ENCODE measurements at regions of chr12 and their contacts with region 1.

Region 1: DNA sequence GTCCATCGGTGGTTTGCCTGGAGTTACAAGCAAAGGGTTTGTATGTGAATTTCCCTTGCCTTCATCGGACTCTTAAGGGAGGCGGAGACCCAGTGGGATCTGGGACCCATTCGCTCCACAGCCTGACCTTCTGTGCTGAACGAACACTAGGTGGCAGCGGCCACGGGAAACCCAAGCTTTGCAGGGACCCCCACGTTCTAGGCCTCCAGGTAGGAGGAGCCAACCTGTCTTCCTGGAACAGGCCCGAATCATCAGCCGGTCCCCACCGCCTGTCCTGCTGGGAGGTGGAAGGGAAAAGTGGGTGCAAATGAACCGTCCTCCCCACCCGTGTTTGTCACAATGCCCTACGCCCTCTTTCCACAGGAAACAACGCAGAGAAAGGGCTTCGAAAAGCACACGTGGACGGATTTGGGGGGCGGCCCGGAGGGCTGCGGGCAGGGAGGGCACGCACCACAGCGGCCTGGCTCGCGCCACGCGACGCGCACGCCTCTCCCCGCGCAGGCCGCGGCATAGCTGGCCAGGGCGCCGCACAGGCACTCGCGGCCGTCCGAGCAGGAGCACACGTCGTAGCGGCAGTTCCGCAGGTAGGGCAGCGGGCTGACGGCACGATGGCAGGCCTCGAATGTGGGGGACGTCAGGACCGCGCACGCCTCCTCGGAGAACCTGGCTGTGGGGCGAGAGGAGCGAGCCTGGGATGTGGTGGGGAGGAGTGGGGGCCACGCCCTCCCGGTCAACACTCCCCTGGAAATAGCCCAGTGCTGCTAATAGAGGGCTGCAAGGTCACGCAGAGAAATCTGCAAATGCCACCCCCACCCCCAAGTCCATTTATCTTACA is 67.8 kb downstream of the VWF start:
- DNase-seq: peak; percentile 33 to 63
- H3K4me3 ChIP-seq: peak overlapping the region; percentile 38 to 62 (median 40)
- H3K27ac ChIP-seq: no peak overlapping the region
- H3K4me1 ChIP-seq: peaks cover 7 to 18% (median 16%) of the 10 kb centered on the region in 4 experiments
- H3K27me3 ChIP-seq: peaks cover 0 to 16% (median 10%) of the 10 kb centered on the region in 4 experiments; a peak in 5 of 7 replicates
- CTCF ChIP-seq: peak; percentile 58 to 66 (median 60)
- EP300 ChIP-seq: no peak
- POLR2A ChIP-seq: no peak
- RAD21 ChIP-seq: peak; percentile 25 to 56; a peak in 3 of 4 replicates

Region 2: DNA sequence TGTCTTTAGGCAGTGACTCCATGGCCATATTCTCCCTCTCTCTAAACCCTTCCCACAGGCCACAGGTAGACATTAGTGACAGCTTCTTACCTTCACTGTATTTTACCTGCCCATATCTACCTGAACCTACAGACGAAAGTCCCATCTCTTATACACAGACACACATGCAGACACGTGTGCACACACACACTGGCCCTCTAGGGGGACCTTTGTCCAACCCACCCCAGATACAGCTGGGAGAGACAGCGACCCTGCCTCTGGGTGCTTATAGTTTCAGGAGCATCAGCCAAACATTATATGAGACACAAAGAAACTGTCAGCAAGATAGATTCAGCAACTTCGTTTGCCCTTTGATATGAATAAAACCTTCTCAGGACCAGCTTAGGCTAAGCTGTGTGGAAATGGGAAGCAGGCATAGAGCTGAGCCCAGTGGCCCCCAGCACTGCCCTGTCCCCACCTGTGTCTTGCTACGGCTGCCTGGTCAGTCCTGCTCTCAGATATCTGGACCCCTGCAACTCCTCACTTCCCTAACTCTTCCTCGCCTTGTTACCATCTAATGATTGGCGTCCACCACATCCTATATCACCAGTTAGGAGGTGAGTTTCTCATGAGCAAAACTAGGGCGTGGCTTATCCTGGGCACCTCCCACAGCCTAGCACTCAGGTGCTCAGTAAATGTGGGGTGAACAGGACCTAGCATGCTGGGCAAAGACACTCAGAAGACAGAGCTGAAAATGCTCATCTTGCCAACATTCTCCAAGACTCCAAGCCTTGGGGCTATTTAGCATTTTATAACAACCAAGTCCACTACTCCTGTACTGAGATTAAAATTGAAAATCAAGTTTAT is 131.5 kb after region 1 on chr12:
- CTCF ChIA-PET with region 1: interaction called, 12 read pairs
- POLR2A ChIA-PET with region 1: no interaction called
- DNase-seq: no peak
- H3K4me3 ChIP-seq: no peak overlapping the region
- H3K27ac ChIP-seq: no peak overlapping the region
- H3K4me1 ChIP-seq: peaks cover 0 to 3% (median 1%) of the 10 kb centered on the region in 4 experiments; a peak in 1 of 7 replicates
- H3K27me3 ChIP-seq: no peaks in the 10 kb centered on the region; a peak in 1 of 7 replicates
- CTCF ChIP-seq: peak in 2 of 3 experiments; percentile 6 to 7; a peak in 2 of 4 replicates
- EP300 ChIP-seq: no peak
- POLR2A ChIP-seq: no peak
- RAD21 ChIP-seq: no peak